AG04449 (cell line): ENCODE measurements at regions of chr7 and their contacts with region 1.

Region 1: GRCh38 chr7:137681657-137682562 is 164.9 kb downstream of the DGKI start:
- DNase-seq: peak; percentile 65
- H3K4me3 ChIP-seq: no peak overlapping the region
- CTCF ChIP-seq: no peak

Region 2: DNA sequence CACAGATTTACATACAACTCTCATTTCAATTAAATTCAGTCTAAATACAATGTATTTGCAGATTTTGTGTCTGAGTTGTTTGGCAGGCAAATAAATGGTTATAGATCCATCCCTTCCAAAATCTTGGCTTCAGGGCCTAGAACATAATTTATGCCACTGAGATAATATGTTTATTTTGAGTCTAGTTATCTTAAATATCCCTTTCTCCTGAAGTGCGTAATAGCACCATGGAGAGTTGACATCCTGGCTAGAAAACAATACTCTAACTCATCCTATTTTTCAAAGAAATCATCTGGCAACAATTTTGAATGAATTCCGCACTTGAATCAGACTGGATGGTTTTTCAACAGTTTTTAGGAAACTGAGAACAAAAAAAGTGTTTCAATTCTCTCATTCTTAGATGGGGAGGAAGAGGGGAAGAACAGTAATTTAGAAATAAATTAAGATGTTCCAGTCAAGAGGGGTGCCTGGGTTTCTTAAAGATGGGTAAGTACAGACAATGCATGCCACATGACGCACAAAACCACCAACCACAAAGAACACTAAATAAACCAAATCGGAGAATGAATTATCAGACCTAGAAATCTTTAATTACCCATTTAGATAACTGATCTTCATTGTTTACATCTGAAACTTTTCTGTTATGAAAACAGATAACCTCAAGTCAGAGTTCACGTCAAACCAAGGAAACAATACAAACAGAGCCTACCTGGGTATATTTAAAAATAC is 109.7 kb before region 1 on chr7:
- CTCF ChIA-PET with region 1: no interaction called
- POLR2A ChIA-PET with region 1: no interaction called
- DNase-seq: no peak
- H3K4me3 ChIP-seq: no peak overlapping the region
- CTCF ChIP-seq: no peak

Region 3: DNA sequence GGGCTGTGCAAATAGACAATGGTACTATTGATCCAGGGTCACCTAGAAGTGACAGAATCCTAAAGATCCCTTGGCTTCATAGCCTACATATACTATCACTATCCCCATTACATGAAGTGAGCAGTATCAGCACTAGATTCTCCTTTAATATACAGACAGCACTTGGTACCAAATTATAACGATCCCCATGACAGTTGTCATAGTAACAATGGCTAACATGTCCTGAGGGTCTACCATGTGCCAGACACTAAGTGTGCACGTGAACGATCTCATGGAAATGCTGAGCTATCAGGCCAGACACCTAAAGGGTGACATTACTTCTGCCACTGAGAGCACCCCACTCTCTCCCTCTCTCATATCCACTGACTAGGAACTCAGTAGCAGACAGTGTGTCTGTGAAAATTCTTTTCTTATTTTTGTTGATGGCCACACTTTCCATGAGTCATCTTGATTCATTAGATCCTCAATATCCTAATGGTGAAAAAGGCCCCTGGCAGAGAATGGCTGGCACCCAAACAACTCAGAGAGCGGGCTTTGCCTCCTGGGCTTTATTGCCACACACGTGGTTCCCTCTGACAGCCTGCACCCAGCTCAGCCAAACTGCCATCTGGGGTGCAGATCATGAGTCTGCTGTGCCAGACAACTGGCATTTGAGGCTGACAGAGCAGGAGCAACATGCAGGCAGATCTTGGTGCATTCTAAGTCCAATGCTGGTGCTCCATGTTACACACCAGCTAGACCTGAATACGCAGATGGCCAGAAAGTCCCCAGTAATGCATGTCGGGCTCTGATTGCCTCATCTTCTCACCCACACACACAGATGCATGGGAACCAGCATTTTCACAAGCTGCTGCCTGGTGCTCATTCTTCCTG is 11.5 kb before region 1 on chr7:
- CTCF ChIA-PET with region 1: interaction called, 4 read pairs
- POLR2A ChIA-PET with region 1: interaction called, 16 read pairs
- DNase-seq: no peak
- H3K4me3 ChIP-seq: no peak overlapping the region
- CTCF ChIP-seq: no peak